ENCODE measurements at regions of chr13 and their contacts with region 1.

Region 1: GRCh38 chr13:75566658-75567057 is 17.1 kb downstream of the UCHL3 start:
- DNase-seq: no peak
- H3K4me3 ChIP-seq: no peak overlapping the region
- CTCF ChIP-seq: peak; percentile 25

Region 2: GRCh38 chr13:75050419-75051046 is 516.1 kb before region 1 on chr13:
- CTCF ChIA-PET with region 1: no interaction called
- POLR2A ChIA-PET with region 1: no interaction called
- DNase-seq: peak; percentile 24
- H3K4me3 ChIP-seq: no peak overlapping the region
- CTCF ChIP-seq: no peak

Region 3: DNA sequence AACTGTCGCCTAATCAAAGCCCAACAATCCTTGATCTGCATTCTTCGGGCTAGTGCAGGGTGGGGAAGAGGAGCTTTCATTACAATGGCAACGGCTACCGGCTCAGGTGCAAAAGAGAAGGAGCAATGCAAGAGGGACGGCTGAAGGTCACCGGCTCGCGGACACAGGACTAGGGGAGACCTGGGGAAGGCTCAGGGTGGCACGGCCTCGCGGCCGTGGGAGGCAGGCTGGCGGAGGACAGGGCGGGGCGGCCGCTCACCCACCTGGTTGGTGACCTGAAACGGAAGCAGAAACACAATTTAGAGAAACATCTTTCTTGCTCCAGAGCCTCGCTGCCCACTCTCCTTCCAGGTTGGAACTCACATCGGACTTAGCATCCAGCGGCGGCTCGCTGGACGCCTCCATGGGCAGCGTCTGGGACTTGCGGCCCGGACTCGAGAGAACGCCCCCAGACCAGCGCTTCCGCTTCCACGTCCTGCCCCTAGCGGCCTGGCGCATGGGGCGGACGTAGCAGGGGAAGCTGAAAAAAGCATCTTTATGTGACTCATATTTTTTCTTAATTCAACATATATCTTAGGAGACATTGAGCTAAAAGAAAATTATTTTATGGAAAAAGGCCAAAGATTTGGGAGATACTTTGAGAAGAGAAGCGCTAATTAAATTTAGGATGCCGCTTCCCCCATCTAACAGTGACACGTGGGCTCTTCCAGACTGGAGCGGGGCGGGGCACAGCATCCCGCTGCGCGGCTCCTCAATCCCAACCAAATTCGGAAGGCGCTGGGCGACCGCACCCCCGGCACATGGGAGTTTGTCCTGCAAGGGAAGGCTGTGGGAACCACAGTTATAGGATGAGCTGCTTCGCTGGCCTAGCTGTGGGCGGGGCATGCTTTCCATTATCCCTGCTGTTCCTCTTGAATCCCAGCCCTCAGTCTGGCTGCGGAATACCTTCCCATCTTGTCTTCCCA is 29.0 kb before region 1 on chr13 and contains the start of gene COMMD6:
- CTCF ChIA-PET with region 1: no interaction called
- POLR2A ChIA-PET with region 1: no interaction called
- DNase-seq: peak; percentile 85
- H3K4me3 ChIP-seq: peak within 1 kb of the TSS; percentile 78
- CTCF ChIP-seq: peak; percentile 51

Region 4: GRCh38 chr13:75549262-75550158 is 17.1 kb before region 1 on chr13 and contains the start of gene UCHL3:
- CTCF ChIA-PET with region 1: interaction called, 10 read pairs
- POLR2A ChIA-PET with region 1: interaction called, 5 read pairs
- DNase-seq: peak; percentile 59
- H3K4me3 ChIP-seq: peak within 1 kb of the TSS; percentile 91
- CTCF ChIP-seq: peak; percentile 99

Region 5: DNA sequence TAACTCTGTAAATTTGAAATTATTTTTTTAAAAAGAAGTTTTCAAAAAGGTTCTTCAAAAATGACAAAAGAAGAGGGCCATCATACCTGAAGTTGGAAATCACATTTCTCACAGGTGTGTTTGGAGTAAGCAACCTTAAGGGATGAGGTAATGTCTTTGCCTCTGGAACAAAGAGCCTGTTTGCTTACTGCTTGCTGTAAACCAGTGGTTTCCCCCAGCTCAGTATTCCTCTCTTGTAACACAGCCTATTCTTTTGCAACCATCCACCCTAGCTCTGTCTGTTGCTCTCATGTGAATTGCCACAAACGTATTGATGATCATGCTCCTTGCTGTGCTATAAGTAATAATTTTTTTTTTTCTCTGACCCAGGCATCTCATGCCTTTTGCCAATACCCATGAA is 21.0 kb after region 1 on chr13:
- CTCF ChIA-PET with region 1: no interaction called
- POLR2A ChIA-PET with region 1: no interaction called
- DNase-seq: no peak
- H3K4me3 ChIP-seq: no peak overlapping the region
- CTCF ChIP-seq: no peak

Measured in AG04449 (cell line).